Endothelial cell of umbilical vein (primary cell): ENCODE measurements at regions of chr7 and their contacts with region 1.

Region 1: GRCh38 chr7:94069162-94069739 is 65.1 kb upstream of the BET1 start:
- DNase-seq: no peak
- H3K4me3 ChIP-seq: no peak overlapping the region
- H3K27ac ChIP-seq: no peak overlapping the region
- H3K4me1 ChIP-seq: peaks cover 20% of the 10 kb centered on the region
- H3K27me3 ChIP-seq: peaks cover 50 to 74% of the 10 kb centered on the region in 2 experiments
- CTCF ChIP-seq: no peak
- POLR2A ChIP-seq: no peak

Region 2: DNA sequence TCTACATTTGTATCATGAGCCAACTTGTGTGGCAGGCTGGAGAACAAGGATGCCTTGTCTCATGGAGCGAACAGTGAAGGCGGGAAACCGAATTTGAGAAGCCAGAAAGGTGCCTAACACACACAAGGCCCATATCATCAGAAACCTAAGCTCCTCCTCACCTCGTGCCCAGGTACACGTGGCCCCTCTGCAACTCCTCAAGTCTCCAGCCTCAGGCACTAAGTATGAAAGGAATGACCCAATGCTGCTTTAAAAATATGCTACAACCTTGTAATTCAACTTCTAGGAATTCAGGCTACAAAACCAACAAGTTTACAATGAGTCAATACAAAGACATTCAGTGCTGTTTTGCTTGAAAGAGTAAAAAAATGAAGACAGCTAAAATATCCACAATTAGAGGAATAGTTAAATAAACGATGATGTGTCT is 1328.5 kb before region 1 on chr7:
- CTCF ChIA-PET with region 1: no interaction called
- POLR2A ChIA-PET with region 1: no interaction called
- dilution Hi-C with region 1: no loop called
- intact Hi-C with region 1: no loop called
- DNase-seq: no peak
- H3K4me3 ChIP-seq: no peak overlapping the region
- H3K27ac ChIP-seq: no peak overlapping the region
- H3K4me1 ChIP-seq: no peaks in the 10 kb centered on the region
- H3K27me3 ChIP-seq: no peaks in the 10 kb centered on the region
- CTCF ChIP-seq: no peak
- POLR2A ChIP-seq: no peak

Region 3: DNA sequence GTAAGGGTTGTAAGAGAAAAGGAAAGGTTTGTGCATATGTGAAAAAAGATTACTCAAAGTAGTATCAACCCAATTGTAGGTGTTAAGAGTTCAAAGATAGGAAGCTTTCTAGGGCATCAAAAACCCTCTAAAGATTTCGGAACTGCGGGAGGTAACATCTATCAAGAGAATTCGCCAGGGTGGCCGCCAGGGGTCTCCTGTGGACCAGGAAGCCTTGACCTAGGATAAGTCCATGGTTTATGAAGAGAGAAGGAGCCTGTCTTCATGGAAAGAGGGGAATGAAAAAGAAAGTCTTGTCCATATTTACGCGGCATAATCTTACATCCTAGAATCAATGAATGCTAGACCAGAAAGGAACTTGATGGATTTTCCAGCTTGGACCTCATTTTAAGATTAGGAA is 354.0 kb before region 1 on chr7:
- CTCF ChIA-PET with region 1: no interaction called
- POLR2A ChIA-PET with region 1: no interaction called
- dilution Hi-C with region 1: no loop called
- intact Hi-C with region 1: loop called (anchors 1 kb)
- DNase-seq: peak; percentile 58
- H3K4me3 ChIP-seq: no peak overlapping the region
- H3K27ac ChIP-seq: no peak overlapping the region
- H3K4me1 ChIP-seq: no peaks in the 10 kb centered on the region
- H3K27me3 ChIP-seq: peaks cover 15 to 26% of the 10 kb centered on the region in 2 experiments
- CTCF ChIP-seq: peak; percentile 71 to 72
- POLR2A ChIP-seq: no peak

Region 4: DNA sequence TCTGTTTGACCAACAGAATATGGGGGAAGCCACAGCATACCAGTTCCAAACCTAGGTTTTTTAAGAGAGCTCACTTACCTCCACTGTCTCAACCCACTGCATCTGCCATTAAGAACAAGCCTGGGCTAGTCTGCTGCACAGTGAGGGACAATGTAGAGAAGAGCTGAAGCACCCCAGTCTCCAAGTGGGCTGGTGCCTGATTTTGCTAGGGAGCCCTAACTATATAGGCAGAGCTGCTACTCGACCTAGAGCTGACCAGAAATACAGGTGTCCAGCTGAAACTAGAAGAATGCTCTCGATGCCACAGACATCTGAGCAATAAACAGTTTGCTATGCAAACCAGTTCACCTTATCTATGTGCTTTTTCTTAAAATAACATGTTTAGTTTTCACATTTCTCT is 41.8 kb after region 1 on chr7:
- CTCF ChIA-PET with region 1: no interaction called
- POLR2A ChIA-PET with region 1: no interaction called
- dilution Hi-C with region 1: no loop called
- intact Hi-C with region 1: no loop called
- DNase-seq: no peak
- H3K4me3 ChIP-seq: no peak overlapping the region
- H3K27ac ChIP-seq: no peak overlapping the region
- H3K4me1 ChIP-seq: no peaks in the 10 kb centered on the region
- H3K27me3 ChIP-seq: no peaks in the 10 kb centered on the region
- CTCF ChIP-seq: no peak
- POLR2A ChIP-seq: no peak